ENCODE measurements at regions of chr6 and their contacts with region 1.

Region 1: DNA sequence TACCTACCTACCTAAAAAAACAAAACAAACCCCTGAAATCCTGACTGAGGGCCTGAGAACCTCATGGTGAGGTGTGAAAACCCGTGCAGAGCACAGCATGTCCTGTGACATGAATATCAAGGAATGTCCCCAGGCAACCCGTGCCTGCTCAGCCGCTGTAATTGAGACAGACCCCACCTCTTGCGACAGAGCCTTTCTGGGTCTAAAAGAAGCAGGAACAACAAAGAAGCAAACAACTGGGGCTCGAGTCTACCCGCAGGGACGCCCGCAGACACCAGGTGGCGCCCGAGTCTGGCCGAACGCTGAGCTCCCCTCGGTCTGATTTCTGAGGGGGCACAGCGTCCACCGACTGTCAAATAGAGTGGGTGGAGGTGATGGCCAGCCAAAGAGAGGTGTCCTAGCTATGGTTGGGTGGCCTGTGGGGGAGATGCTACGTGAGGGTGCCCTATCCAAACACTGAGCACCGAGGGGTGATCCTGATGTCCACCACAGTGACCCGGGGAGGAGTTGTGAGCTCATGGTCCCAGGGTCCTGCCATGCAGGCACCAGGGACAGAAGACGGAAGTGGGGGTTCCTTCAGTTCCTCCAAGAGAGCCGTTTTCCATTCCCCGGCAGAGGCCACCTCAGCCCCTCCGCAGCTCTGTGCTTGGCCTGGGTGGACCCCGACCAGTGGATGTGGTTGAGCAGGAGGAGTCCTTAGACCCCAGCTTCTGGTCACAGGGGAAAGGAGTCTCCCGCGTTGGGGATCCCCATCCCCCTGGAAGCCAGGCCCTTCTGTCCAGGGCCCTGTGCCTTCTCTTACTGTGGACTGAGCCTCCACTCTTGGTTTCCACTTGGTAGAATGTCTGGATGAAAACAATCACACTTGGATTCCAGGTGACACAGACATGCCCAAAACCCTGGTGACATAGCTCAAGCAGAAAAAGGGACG is 268.2 kb downstream of the CDC5L start:
- DNase-seq: peak; percentile 42 to 89 (median 77)

Region 2: GRCh38 chr6:44475779-44476434 is 179.8 kb before region 1 on chr6:
- intact Hi-C with region 1: loop called (anchors 10 kb)
- DNase-seq: peak; percentile 70 to 93 (median 84)

Region 3: DNA sequence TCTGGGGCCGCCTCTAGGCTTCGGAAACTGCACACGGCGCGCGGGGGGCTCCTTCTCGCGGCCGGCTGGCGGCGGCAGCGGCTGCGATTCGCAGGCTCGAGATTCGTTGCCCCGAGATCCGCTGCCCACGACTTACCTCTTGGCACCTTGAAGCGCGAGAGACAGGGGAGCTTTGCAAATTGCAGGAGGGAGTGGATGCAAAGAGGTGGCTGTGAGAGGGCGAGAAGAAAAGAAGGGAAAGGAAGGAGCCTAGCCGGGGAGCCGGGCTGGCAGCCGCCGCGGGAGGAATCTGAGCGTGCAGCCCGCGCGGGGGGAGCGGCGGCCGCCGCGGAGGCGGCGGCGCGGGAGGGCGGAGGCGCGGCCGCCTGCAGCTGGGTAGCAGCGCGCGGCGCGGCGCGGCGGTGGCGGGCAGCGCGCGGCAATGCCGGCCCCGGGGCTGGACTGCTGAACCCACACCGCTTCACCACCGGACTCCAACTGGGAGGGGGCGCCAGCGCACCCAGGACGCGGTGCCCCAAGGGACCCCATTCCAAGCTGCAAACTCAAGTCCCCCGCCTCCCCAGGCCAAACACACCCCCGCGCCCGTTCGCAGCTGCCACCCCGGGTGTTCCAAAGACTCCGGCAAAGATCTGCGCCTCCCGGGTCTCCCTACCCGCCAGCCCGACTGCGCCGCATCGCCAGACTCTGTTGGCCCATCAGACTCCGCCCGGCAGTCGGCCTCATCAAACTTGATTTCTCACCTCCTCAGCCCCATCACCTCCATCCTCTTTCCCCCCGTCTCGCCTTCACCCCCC is 766.2 kb after region 1 on chr6:
- intact Hi-C with region 1: loop called (anchors 10 kb)
- DNase-seq: peak; percentile 33 to 86 (median 72)

Region 4: GRCh38 chr6:45714741-45715507 is 1059.2 kb after region 1 on chr6:
- intact Hi-C with region 1: loop called (anchors 5 kb)
- DNase-seq: peak in 37 of 42 donors; percentile 14 to 87 (median 66)

Region 5: DNA sequence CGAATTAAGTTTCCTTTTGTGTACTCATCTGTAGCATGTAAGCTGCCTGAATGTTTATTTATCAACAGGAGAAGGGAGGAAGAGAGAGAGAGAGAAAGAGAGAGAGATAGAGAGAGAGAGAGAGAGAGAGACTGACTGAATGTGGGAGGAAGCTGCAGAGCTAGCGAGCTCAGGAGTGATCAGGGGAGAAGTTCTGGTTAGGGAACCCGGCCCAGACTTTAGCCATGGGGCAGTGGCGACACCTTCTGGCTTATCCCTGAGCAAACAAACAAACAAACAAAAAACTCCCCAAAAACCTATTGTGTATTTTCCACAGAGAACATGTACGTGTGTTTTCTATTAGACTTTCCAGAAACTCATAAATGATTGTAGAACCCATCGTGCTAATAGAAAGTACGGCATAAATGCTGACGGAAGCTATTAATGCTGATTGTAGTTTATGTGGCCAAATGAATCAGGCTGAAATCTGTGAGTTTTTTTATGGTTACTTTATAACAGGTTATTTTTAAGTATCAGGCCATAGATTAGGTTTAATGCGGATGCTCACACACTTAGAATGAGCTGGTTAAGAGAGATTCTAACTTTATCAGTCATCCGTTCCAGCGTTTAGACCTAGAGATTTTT is 1267.2 kb after region 1 on chr6:
- intact Hi-C with region 1: loop called (anchors 5 kb)
- DNase-seq: peak; percentile 42 to 87 (median 70)

Measured in head of caudate nucleus (tissue), 42 donors.